Ascending aorta (tissue), 2 donors: ENCODE measurements at regions of chr12 and their contacts with region 1.

Region 1: DNA sequence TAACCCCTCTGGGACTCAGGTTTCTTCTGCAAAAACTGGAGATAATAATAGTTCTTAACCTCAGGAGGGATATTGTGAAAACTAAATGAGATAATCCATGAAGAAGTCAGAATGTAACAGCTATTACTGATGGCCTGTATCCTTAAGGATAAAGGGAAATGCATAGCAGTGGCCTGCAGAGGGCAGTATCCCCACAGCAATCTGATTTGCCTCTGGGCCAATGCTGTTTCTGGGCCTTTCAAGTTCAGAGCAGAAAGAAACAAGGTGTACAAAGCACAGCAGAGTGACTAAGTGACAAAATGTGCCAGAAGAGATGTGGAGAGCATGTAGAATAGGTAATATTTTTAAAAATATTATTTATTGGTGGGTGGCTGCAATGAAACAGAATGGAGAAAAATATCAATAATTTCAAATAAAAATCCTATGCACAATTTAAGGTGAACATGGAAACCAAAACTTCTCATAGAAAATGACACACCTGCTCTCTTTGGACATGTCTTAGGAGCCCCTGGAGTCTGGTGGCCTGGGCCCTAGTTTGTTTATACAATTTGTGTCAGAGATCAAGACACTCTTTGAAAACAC is 90.3 kb downstream of the C12orf75 start:
- DNase-seq: peak in 1 of 2 donors; percentile 84
- H3K4me3 ChIP-seq: no peak overlapping the region
- H3K27ac ChIP-seq: no peak overlapping the region
- H3K4me1 ChIP-seq: no peaks in the 10 kb centered on the region
- H3K27me3 ChIP-seq: no peaks in the 10 kb centered on the region
- CTCF ChIP-seq: peak; percentile 77 to 91 (median 85)

Region 2: GRCh38 chr12:105053116-105053572 is 367.6 kb before region 1 on chr12:
- intact Hi-C with region 1: no loop called
- DNase-seq: peak; percentile 17 to 92
- H3K4me3 ChIP-seq: no peak overlapping the region
- H3K27ac ChIP-seq: no peak overlapping the region
- H3K4me1 ChIP-seq: no peaks in the 10 kb centered on the region
- H3K27me3 ChIP-seq: no peaks in the 10 kb centered on the region
- CTCF ChIP-seq: peak; percentile 84 to 92 (median 91)

Region 3: GRCh38 chr12:105705765-105706164 is 285.0 kb after region 1 on chr12:
- intact Hi-C with region 1: loop called (anchors 5 kb)
- DNase-seq: peak in 1 of 2 donors; percentile 82
- H3K4me3 ChIP-seq: no peak overlapping the region
- H3K27ac ChIP-seq: peak overlapping the region; percentile 74 to 83
- H3K4me1 ChIP-seq: peaks cover 0 to 18% of the 10 kb centered on the region in 2 donors
- H3K27me3 ChIP-seq: no peaks in the 10 kb centered on the region
- CTCF ChIP-seq: peak; percentile 57 to 90 (median 84)

Region 4: DNA sequence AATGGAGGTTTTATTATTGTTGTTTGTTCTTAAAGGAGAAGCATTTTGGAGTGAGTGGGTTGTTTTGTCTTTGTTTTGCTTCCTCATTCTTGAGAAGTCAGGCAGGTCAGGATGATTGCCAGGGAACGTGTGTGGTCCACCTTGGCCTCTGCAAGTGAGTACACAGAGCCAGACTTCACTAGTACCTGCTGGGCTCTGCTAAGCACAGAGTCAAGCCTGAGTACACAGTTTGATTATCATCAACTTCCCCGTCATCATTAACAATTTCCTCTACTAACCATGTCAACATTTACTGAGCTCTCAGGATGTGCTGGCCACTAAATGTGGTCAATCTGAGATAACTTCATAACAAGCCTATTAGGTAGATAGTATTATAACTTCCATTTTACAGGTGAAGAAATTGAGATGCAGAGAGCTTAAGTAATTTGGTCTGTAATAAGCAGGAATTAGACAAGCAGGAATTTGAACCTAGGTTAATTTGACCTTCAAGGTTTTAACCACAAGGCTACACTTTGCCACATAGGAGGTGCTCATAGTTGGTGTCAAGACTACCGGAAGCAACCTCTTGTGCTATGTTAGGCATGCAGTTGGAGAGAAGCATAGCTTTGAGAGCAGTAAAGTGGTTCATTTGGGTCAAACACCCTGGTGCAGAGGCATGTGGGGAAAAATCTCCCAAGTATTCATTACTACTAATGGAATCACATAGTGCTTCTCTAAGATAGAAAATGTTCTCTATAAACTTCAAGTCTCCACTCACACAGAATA is 539.8 kb after region 1 on chr12:
- intact Hi-C with region 1: loop called (anchors 10 kb)
- DNase-seq: no peak
- H3K4me3 ChIP-seq: no peak overlapping the region
- H3K27ac ChIP-seq: peak overlapping the region in 1 of 2 donors; percentile 6
- H3K4me1 ChIP-seq: peaks cover 0 to 11% of the 10 kb centered on the region in 2 donors
- H3K27me3 ChIP-seq: no peaks in the 10 kb centered on the region
- CTCF ChIP-seq: no peak

Region 5: DNA sequence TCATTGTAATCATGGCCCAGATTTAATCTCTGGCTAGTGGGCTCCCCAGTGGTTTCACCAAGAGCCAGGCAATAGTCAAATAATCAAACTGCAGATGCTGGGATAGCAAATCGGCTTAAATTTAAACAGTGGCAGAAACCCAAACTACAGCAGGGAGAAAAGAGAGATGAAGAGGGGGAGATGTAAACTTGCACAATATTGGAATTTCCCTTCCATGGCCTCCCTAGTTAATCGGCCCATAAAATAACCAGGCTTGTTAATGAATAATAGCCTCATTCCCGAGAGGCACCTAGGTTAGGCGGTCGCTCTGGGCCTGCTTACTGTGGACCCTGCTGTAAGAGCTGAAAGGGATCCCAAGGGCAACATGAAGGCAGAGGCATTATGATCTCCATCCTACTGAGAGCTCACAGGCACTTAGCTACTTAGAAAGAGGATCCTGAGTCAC is 601.8 kb after region 1 on chr12:
- intact Hi-C with region 1: loop called (anchors 10 kb)
- DNase-seq: no peak
- H3K4me3 ChIP-seq: no peak overlapping the region
- H3K27ac ChIP-seq: no peak overlapping the region
- H3K4me1 ChIP-seq: peaks cover 0 to 12% of the 10 kb centered on the region in 2 donors
- H3K27me3 ChIP-seq: no peaks in the 10 kb centered on the region
- CTCF ChIP-seq: no peak

Region 6: GRCh38 chr12:106147956-106148355 is 727.2 kb after region 1 on chr12:
- intact Hi-C with region 1: loop called (anchors 1 kb)
- DNase-seq: peak; percentile 53 to 88
- H3K4me3 ChIP-seq: no peak overlapping the region
- H3K27ac ChIP-seq: peak overlapping the region; percentile 43 to 57
- H3K4me1 ChIP-seq: peaks cover 4 to 25% of the 10 kb centered on the region in 2 donors
- H3K27me3 ChIP-seq: no peaks in the 10 kb centered on the region
- CTCF ChIP-seq: no peak

Region 7: GRCh38 chr12:106223485-106224354 is 803.0 kb after region 1 on chr12:
- intact Hi-C with region 1: loop called (anchors 1 kb)
- DNase-seq: peak in 1 of 2 donors; percentile 76
- H3K4me3 ChIP-seq: no peak overlapping the region
- H3K27ac ChIP-seq: no peak overlapping the region
- H3K4me1 ChIP-seq: peaks cover 0 to 4% of the 10 kb centered on the region in 2 donors
- H3K27me3 ChIP-seq: no peaks in the 10 kb centered on the region
- CTCF ChIP-seq: peak; percentile 81 to 97 (median 91)